CD8-positive, alpha-beta T cell (primary cell): ENCODE measurements at regions of chr18 and their contacts with region 1.

Region 1: GRCh38 chr18:14117606-14118005 is 14.6 kb downstream of the ZNF519 start:
- DNase-seq: no peak
- ATAC-seq: no peak
- H3K4me3 ChIP-seq: no peak overlapping the region
- H3K4me3 Mint-ChIP-seq: no peak overlapping the region
- H3K27ac ChIP-seq: no peak overlapping the region
- H3K27ac Mint-ChIP-seq: no peak overlapping the region
- H3K4me1 ChIP-seq: no peaks in the 10 kb centered on the region
- H3K4me1 Mint-ChIP-seq: peaks cover 2% of the 10 kb centered on the region
- H3K27me3 ChIP-seq: no peaks in the 10 kb centered on the region
- H3K27me3 Mint-ChIP-seq: no peaks in the 10 kb centered on the region
- CTCF ChIP-seq: no peak

Region 2: GRCh38 chr18:14053661-14054060 is 63.9 kb before region 1 on chr18:
- CTCF ChIA-PET with region 1: no interaction called
- POLR2A ChIA-PET with region 1: no interaction called
- intact Hi-C with region 1: loop called in 1 of 2 experiments (anchors 10 kb)
- DNase-seq: no peak
- ATAC-seq: no peak
- H3K4me3 ChIP-seq: no peak overlapping the region
- H3K4me3 Mint-ChIP-seq: no peak overlapping the region
- H3K27ac ChIP-seq: no peak overlapping the region
- H3K27ac Mint-ChIP-seq: no peak overlapping the region
- H3K4me1 ChIP-seq: no peaks in the 10 kb centered on the region
- H3K4me1 Mint-ChIP-seq: no peaks in the 10 kb centered on the region
- H3K27me3 ChIP-seq: no peaks in the 10 kb centered on the region
- H3K27me3 Mint-ChIP-seq: peaks cover 3% of the 10 kb centered on the region
- CTCF ChIP-seq: no peak

Region 3: GRCh38 chr18:14144628-14144895 is 27.0 kb after region 1 on chr18:
- CTCF ChIA-PET with region 1: no interaction called
- POLR2A ChIA-PET with region 1: no interaction called
- intact Hi-C with region 1: no loop called
- DNase-seq: no peak
- ATAC-seq: no peak
- H3K4me3 ChIP-seq: no peak overlapping the region
- H3K4me3 Mint-ChIP-seq: no peak overlapping the region
- H3K27ac ChIP-seq: no peak overlapping the region
- H3K27ac Mint-ChIP-seq: no peak overlapping the region
- H3K4me1 ChIP-seq: no peaks in the 10 kb centered on the region
- H3K4me1 Mint-ChIP-seq: no peaks in the 10 kb centered on the region
- H3K27me3 ChIP-seq: no peaks in the 10 kb centered on the region
- H3K27me3 Mint-ChIP-seq: no peaks in the 10 kb centered on the region
- CTCF ChIP-seq: no peak